ENCODE measurements at regions of chr3 and their contacts with region 1.

Region 1: GRCh38 chr3:111810909-111811308 is 48.2 kb upstream of the PHLDB2 start:
- DNase-seq: no peak
- ATAC-seq: no peak
- H3K4me3 ChIP-seq: no peak overlapping the region
- H3K27ac ChIP-seq: no peak overlapping the region
- H3K4me1 ChIP-seq: no peaks in the 10 kb centered on the region
- H3K27me3 ChIP-seq: no peaks in the 10 kb centered on the region
- CTCF ChIP-seq: no peak
- EP300 ChIP-seq: no peak
- POLR2A ChIP-seq: no peak
- RAD21 ChIP-seq: no peak

Region 2: DNA sequence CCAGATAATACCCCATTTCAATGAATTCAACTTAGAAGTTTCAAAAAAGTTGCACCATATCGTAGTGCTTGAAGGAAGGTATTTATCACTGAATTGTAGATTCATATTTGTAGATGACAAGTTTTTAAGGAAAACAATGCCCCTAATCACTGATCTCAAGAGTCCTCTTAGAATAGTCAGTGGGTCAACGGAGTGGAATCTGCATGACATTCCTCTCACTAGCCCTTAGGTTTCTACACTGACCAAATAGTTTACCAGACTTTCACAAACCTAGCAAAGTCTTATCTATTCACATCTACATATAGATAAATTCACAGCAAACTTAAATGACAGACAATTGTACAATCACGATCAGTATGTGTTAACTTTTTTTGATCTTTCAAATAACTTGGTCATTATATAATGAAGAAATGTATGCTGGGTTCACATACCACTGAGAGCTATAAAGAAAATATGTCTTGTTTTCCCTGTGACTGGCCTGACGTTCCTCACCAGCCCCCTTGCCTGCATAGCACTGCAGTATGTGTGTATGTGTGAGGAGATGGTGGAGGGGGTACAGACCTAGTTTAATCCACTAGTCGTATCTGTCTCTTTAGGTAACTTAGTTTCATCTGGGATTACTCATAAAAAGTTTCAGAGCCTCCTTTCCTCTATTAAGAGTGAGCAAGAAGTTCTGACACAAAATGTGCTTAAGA is 12.6 kb after region 1 on chr3:
- CTCF ChIA-PET with region 1: interaction called, 3 read pairs
- POLR2A ChIA-PET with region 1: no interaction called
- RAD21 ChIA-PET with region 1: interaction called, 4 read pairs
- SMC1A ChIA-PET with region 1: interaction called, 12 read pairs
- in situ Hi-C with region 1: no loop called
- intact Hi-C with region 1: no loop called
- DNase-seq: no peak
- ATAC-seq: no peak; the same call in 2 of the 3 replicates
- H3K4me3 ChIP-seq: no peak overlapping the region
- H3K27ac ChIP-seq: no peak overlapping the region
- H3K4me1 ChIP-seq: no peaks in the 10 kb centered on the region
- H3K27me3 ChIP-seq: no peaks in the 10 kb centered on the region
- CTCF ChIP-seq: no peak
- EP300 ChIP-seq: no peak
- POLR2A ChIP-seq: no peak
- RAD21 ChIP-seq: no peak

Measured in GM12878 (cell line).